Caco-2 (cell line): ENCODE measurements at regions of chr9 and their contacts with region 1.

Region 1: DNA sequence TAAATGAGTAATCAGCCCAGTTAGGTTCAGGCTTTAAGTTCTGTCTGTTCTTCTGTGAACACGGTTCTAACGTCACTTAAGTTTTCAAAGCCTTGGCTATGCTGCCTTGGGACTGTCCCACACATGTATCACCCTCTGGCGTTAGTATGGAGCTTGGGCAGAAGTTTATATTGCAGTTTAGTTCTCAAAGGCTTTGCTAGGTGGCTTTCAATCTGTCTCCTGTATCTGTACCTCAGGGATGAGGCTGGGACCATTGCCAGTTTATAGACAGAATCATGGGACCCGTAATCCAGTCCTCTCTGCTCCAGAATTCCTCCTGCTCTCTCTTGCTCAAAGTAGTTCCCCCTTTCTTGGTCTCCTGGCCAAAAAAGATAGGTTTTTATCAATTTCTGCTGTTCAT is 12.1 kb downstream of the C9orf40 start:
- DNase-seq: peak; percentile 38 to 43
- H3K4me3 ChIP-seq: no peak overlapping the region
- H3K4me3 Mint-ChIP-seq: no peak overlapping the region
- H3K27ac Mint-ChIP-seq: no peak overlapping the region
- H3K4me1 ChIP-seq: no peaks in the 10 kb centered on the region
- H3K4me1 Mint-ChIP-seq: no peaks in the 10 kb centered on the region
- H3K27me3 ChIP-seq: no peaks in the 10 kb centered on the region
- H3K27me3 Mint-ChIP-seq: no peaks in the 10 kb centered on the region
- CTCF ChIP-seq: peak in 1 of 2 experiments; percentile 47

Region 2: GRCh38 chr9:75071530-75072124 is 131.0 kb after region 1 on chr9:
- CTCF ChIA-PET with region 1: no interaction called
- POLR2A ChIA-PET with region 1: no interaction called
- intact Hi-C with region 1: loop called (anchors 5 kb)
- DNase-seq: no peak
- H3K4me3 ChIP-seq: no peak overlapping the region
- H3K4me3 Mint-ChIP-seq: no peak overlapping the region
- H3K27ac Mint-ChIP-seq: no peak overlapping the region
- H3K4me1 ChIP-seq: no peaks in the 10 kb centered on the region
- H3K4me1 Mint-ChIP-seq: no peaks in the 10 kb centered on the region
- H3K27me3 ChIP-seq: no peaks in the 10 kb centered on the region
- H3K27me3 Mint-ChIP-seq: no peaks in the 10 kb centered on the region
- CTCF ChIP-seq: no peak